ENCODE measurements at regions of chr21 and their contacts with region 1.

Region 1: GRCh38 chr21:42002421-42002958 is 7.7 kb downstream of the ZBTB21 start:
- DNase-seq: peak; percentile 75
- H3K4me3 Mint-ChIP-seq: peak overlapping the region; percentile 5
- H3K27ac Mint-ChIP-seq: peak overlapping the region; percentile 88
- H3K4me1 Mint-ChIP-seq: peaks cover 46% of the 10 kb centered on the region
- H3K27me3 Mint-ChIP-seq: no peaks in the 10 kb centered on the region

Region 2: GRCh38 chr21:41361786-41362604 is 640.5 kb before region 1 on chr21 and contains the start of gene MX2:
- intact Hi-C with region 1: loop called (anchors 5 kb)
- DNase-seq: peak; percentile 81
- H3K4me3 Mint-ChIP-seq: peak within 1 kb of the TSS; percentile 80
- H3K27ac Mint-ChIP-seq: peak within 1 kb of the TSS; percentile 89
- H3K4me1 Mint-ChIP-seq: peaks cover 36% of the 10 kb centered on the region
- H3K27me3 Mint-ChIP-seq: peaks cover 5% of the 10 kb centered on the region
- total RNA-seq, gene MX2: 5.3 and 6.1 TPM in 2 replicates

Region 3: DNA sequence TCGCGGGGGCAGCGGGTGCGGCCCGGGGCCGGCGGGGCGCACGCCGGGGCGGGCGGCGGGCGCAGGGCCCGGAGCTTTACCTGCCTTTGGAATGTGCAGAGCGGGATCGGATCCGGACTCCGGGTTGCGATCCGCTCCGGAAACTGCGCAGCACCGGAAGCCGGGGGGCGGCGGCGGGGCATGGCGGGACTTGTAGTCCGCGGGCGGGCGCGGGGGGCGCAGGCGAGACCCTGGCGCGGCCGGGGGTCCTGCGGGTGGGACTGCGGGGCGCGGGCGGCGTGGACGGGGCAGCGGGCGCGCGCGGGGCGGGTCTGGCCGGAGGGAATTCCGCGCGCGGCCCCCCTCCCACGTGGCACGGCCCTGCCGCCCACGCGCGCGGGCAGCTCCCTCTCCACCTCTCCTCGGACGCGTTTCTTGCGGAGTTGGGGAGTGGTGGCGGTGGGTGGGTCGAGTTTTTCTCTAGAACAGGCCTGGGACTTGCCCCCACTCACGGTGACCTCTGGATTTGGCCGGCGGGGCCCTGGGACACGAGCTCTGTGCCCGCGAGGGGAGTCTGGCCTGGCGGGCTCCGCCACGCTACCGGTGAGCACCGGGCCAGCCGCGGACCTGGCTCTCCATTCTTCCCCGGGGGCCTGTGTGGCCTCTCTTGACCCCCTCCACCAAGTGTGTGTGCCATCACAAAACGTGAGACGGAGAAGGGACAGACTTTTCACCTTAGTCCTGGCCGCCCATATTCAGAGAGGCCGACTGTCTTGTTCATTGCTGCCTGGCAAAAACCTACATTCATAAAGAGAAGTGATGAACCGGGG is 123.1 kb before region 1 on chr21 and contains the start of gene PRDM15:
- intact Hi-C with region 1: loop called (anchors 5 kb)
- DNase-seq: peak; percentile 80
- H3K4me3 Mint-ChIP-seq: peak within 1 kb of the TSS; percentile 90
- H3K27ac Mint-ChIP-seq: peak within 1 kb of the TSS; percentile 98
- H3K4me1 Mint-ChIP-seq: peaks cover 18% of the 10 kb centered on the region
- H3K27me3 Mint-ChIP-seq: no peaks in the 10 kb centered on the region
- total RNA-seq, gene PRDM15: 16.2 and 18.2 TPM in 2 replicates

Region 4: GRCh38 chr21:41899426-41900202 is 102.9 kb before region 1 on chr21:
- intact Hi-C with region 1: loop called (anchors 2 kb)
- DNase-seq: peak; percentile 33
- H3K4me3 Mint-ChIP-seq: peak overlapping the region; percentile 26
- H3K27ac Mint-ChIP-seq: peak overlapping the region; percentile 87
- H3K4me1 Mint-ChIP-seq: peaks cover 35% of the 10 kb centered on the region
- H3K27me3 Mint-ChIP-seq: no peaks in the 10 kb centered on the region

Region 5: DNA sequence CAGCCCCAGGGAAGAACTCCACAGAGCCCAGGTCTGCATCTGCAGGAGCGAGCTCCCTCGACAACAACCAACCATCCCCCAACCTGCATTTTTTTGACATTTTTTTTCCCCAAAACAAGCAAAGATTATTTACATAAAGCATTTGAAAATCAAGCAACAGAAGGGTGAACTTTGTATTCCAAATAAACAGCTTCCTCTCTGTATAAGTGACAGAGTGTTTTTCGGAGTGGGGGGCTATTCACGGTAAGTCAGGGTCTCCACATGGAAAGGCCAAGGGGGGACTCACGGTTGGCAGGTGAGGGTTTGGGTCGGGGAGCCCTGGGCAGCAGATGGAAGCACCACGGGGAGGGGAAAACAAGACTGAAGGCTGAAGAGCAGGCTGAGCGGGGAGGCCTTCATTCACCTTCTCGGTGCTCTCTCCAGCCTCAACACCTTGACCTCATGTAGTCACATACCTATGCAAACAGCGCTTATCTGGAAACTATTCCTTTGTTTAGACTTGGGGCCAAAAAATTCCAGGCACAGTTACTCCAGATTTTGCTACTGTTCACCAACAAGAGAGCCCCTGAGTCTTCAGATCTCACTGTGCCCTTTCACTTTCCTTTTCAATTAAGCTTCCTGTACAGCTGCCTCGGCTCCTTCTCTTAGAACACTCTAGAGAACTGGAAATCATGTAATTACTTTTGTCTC is 76.2 kb before region 1 on chr21:
- intact Hi-C with region 1: loop called (anchors 2 kb)
- DNase-seq: peak; percentile 17
- H3K4me3 Mint-ChIP-seq: peak overlapping the region; percentile 86
- H3K27ac Mint-ChIP-seq: peak overlapping the region; percentile 93
- H3K4me1 Mint-ChIP-seq: peaks cover 52% of the 10 kb centered on the region
- H3K27me3 Mint-ChIP-seq: no peaks in the 10 kb centered on the region

Region 6: DNA sequence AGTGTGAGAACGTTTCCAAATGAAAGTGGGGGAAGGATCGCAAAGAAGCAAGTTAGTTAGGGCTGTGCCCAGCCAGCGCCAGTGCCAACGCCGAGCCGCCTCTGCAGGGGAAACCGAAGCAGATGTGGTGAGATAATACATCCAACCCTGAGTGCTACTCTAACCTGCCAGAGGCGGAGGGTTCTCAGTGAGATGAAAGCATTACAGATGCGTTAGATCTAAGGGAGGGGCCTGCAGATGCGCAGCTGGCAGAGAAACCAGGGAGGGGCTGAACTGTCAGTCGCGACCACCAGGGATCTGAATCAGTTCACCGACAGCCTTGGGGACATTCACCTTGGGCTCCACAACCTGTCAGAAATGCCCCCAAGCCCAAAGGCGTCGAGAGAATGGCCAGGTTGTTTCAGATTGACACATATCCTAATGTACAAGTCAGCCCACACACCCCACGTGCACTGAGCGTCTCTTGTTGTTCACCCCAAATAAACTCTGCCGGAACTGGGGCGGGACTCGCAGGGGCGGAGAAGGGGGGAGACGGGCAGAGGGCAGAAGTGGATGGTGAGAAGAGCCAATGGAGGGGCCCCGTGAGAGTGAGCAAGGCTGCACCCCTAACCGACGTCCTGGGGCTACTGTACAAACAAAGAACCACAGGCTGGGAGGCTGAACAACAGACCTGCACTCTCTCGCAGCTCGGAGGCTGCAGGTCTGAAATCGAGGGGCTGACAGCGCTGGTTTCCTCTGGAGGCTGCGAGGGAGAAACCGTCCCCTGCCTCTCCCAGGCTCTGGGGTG is 59.9 kb after region 1 on chr21:
- intact Hi-C with region 1: loop called (anchors 1 kb)
- DNase-seq: peak; percentile 87
- H3K4me3 Mint-ChIP-seq: peak overlapping the region; percentile 70
- H3K27ac Mint-ChIP-seq: peak overlapping the region; percentile 83
- H3K4me1 Mint-ChIP-seq: peaks cover 38% of the 10 kb centered on the region
- H3K27me3 Mint-ChIP-seq: no peaks in the 10 kb centered on the region

Region 7: DNA sequence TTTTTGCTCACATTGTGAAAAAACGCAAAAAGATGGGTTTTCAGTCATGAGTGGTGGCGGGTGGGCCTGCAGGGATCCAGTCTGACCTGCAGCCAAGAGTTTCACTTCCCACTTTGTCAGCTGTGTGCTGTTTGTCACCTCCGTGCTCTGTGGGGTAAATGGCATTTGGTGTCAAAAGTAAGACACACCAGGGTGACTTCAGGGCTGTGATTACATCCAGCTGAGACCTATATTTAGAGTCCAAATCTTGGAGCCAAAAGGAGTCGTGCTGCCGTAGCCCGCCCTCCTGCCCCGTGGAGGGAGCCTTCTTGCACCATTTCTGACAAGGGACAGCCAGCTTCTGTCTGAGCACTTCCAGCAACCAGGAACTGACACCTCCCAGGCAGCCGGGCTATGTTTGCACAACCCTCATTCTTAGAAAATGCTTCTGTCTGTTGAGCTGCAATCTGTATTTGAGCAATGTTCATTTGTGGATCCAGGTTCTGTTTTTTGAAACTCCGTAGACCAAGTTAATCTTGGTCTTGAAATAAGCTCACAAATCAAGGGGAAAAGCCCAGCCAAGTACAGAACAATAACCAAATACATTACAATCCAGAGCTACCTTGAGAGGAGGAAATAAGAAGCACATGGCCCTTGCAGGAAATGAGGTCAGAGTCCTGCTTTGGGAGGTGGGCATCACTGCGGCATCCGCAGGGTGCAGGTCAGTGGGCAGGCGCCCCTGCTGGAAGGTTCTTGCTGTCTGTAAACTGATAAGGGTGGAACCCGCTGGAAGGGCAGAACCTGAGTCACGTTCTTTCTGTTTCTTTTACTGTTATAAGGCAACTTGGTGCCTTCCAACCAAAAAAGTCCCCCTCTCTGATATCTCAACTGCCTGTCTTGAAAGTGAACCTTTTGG is 230.8 kb after region 1 on chr21:
- intact Hi-C with region 1: loop called (anchors 5 kb)
- DNase-seq: peak; percentile 77
- H3K4me3 Mint-ChIP-seq: peak overlapping the region; percentile 63
- H3K27ac Mint-ChIP-seq: peak overlapping the region; percentile 93
- H3K4me1 Mint-ChIP-seq: peaks cover 85% of the 10 kb centered on the region
- H3K27me3 Mint-ChIP-seq: no peaks in the 10 kb centered on the region

Measured in activated T-helper 2 cell treated with anti-CD3 and anti-CD28 coated beads, Interferon-gamma antibody, Interleukin-2, Interleukin-4, amounts not matched to agents 10 μg/mL and 5 μg/mL and 100 μg/mL, durations not matched to agents 14 hours and 24 hours and 36 hours (primary cell).